Heart right ventricle (tissue), 16 donors: ENCODE measurements at regions of chr15 and their contacts with region 1.

Region 1: GRCh38 chr15:100111103-100112060 is 230.4 kb downstream of the ADAMTS17 start:
- DNase-seq: peak; percentile 69 to 74
- ATAC-seq: peak; percentile 20 to 81 (median 62)
- H3K4me3 ChIP-seq: no peak overlapping the region
- H3K27ac ChIP-seq: peak overlapping the region; percentile 58 to 99 (median 96)
- H3K4me1 ChIP-seq: peaks cover 36 to 64% (median 59%) of the 10 kb centered on the region in 9 donors
- H3K27me3 ChIP-seq: no peaks in the 10 kb centered on the region
- CTCF ChIP-seq: peak in 2 of 9 donors; percentile 15 to 17

Region 2: GRCh38 chr15:99961011-99961441 is 150.4 kb before region 1 on chr15:
- intact Hi-C with region 1: loop called in 1 of 10 experiments (anchors 10 kb)
- DNase-seq: peak in 1 of 2 donors; percentile 22
- ATAC-seq: peak; percentile 40 to 81 (median 66)
- H3K4me3 ChIP-seq: no peak overlapping the region
- H3K27ac ChIP-seq: no peak overlapping the region
- H3K4me1 ChIP-seq: no peaks in the 10 kb centered on the region
- H3K27me3 ChIP-seq: peaks cover 0 to 20% (median 4%) of the 10 kb centered on the region in 7 donors
- CTCF ChIP-seq: peak in 7 of 9 donors; percentile 40 to 64 (median 56)

Region 3: DNA sequence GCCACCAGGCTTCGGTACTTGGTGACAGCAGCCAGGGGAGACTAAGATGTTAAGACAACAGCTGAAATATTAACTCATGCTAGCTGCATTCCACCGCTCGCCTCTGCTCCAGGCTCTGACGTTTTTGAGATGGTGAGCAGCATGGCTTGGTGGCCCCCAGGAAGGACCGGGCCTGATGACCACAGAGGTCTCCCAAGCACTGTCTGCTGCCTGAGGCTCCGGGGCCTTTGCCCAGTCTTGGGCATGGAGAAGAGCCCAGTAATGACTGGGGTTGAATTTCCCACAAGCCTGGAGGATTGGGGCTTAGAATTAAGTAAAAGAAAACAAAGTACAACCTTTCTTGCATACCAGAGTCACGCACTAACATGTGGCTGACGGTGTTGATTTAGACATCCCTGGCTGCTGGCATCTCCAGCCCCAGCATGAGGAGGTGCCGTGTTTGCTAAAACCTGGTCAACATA is 134.5 kb before region 1 on chr15:
- intact Hi-C with region 1: loop called in 1 of 10 experiments (anchors 10 kb)
- DNase-seq: no peak
- ATAC-seq: no peak
- H3K4me3 ChIP-seq: no peak overlapping the region
- H3K27ac ChIP-seq: no peak overlapping the region
- H3K4me1 ChIP-seq: peaks cover 0 to 11% (median 0%) of the 10 kb centered on the region in 9 donors
- H3K27me3 ChIP-seq: no peaks in the 10 kb centered on the region
- CTCF ChIP-seq: no peak

Region 4: GRCh38 chr15:100020189-100020588 is 91.2 kb before region 1 on chr15:
- intact Hi-C with region 1: loop called in 1 of 10 experiments (anchors 10 kb)
- DNase-seq: no peak
- ATAC-seq: peak in 6 of 8 donors; percentile 13 to 44 (median 21)
- H3K4me3 ChIP-seq: no peak overlapping the region
- H3K27ac ChIP-seq: peak overlapping the region in 2 of 10 donors; percentile 20 to 25
- H3K4me1 ChIP-seq: peaks cover 0 to 20% (median 0%) of the 10 kb centered on the region in 9 donors
- H3K27me3 ChIP-seq: no peaks in the 10 kb centered on the region
- CTCF ChIP-seq: no peak

Region 5: GRCh38 chr15:100175393-100176114 is 64.2 kb after region 1 on chr15:
- intact Hi-C with region 1: no loop called
- DNase-seq: no peak
- ATAC-seq: no peak
- H3K4me3 ChIP-seq: no peak overlapping the region
- H3K27ac ChIP-seq: no peak overlapping the region
- H3K4me1 ChIP-seq: no peaks in the 10 kb centered on the region
- H3K27me3 ChIP-seq: no peaks in the 10 kb centered on the region
- CTCF ChIP-seq: no peak

Region 6: GRCh38 chr15:100207070-100207469 is 95.7 kb after region 1 on chr15:
- intact Hi-C with region 1: loop called in 1 of 10 experiments (anchors 5 kb)
- DNase-seq: no peak
- ATAC-seq: peak in 6 of 8 donors; percentile 50 to 86 (median 65)
- H3K4me3 ChIP-seq: no peak overlapping the region
- H3K27ac ChIP-seq: no peak overlapping the region
- H3K4me1 ChIP-seq: peaks cover 0 to 12% (median 7%) of the 10 kb centered on the region in 9 donors
- H3K27me3 ChIP-seq: no peaks in the 10 kb centered on the region
- CTCF ChIP-seq: no peak

Region 7: DNA sequence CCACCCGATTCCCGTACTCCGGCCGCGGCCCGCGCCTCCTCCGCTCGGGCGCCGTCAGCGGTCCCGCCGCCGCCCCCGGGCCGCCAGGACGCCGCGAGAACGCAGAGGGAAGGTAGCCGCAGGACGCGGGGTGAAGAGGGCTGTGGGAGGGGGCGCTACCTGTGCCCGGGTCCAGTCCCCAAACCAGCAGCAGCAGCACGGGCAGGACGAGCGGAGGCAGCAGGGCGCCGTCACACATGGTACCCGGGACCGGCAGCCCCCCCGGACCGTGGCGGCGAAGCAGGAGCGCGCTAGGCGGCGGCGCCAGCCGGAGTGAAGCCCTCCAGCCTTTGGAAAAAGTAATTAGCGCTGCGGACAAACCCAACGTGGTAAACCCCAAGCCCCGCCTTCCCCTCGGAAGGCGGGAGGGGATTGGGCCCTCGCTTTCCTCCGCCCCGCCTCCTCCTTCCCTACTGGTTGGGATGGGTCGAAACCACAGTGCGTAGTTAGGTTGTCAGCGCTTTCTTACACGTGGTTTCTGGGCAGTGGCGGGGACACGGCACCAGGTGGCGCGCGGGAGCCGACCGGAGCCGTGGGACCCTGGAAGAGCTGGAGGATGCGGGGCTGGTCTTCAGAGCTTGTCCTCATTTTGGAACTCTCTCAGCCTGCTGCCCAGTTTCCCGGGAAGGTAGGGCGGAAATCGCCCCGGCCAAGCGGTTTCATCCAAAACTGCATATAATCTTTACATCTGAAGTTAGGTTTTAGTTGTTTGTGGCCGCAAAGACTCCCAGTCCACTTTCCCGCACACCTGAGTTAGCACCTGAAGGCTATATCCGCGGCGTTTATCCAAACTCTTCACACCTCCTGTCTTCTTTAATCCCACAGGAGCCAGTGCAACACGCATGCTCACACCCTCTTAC is 230.5 kb after region 1 on chr15 and contains the start of gene ADAMTS17:
- intact Hi-C with region 1: loop called in 4 of 10 experiments (anchors 5 to 10 kb)
- DNase-seq: peak; percentile 94 to 96
- ATAC-seq: peak; percentile 98 to 100 (median 99)
- H3K4me3 ChIP-seq: peak within 1 kb of the TSS; percentile 55 to 86 (median 72)
- H3K27ac ChIP-seq: peak within 1 kb of the TSS in 7 of 10 donors; percentile 39 to 78 (median 45)
- H3K4me1 ChIP-seq: peaks cover 0 to 14% (median 7%) of the 10 kb centered on the region in 9 donors
- H3K27me3 ChIP-seq: peaks cover 0 to 45% (median 13%) of the 10 kb centered on the region in 7 donors
- CTCF ChIP-seq: peak; percentile 83 to 98 (median 95)
- total RNA-seq, gene ADAMTS17: 0.47 to 5.0 (median 1.3) TPM

Region 8: DNA sequence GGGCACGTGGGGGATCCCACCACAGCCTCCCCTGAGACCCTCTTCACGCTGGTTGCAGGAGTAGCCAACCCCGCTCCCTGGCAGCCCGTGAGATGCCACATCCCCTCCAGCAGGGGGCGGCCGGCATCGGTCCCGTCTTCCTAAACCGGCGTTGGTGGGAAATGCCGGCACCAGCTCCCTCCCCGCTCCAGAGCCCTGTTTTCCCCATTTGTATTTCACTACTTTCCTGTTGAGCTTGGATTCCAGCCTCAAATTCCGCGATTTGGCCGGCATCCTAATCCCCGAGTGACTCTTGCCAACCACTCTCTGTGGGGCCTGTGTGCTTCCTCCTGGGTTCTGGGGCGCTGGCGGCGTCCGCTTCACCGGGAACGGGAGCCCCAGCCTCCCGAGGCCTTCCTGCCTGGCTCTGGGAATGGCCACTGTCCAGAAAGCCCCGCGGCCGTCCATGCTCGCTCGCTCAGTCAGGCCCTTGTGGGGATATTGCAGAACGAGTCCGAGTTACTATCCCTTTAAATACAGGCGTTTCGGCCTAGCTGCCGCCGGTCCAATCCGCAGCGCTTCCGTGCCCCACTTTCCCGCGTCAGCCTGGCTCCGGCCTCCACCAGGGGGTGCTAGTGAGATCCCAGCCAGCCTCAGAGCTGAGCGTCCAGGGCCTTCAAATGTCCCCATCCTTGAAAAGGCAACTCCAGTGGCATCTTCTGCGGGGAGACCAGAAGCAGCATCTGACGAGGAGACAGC is 238.5 kb after region 1 on chr15:
- intact Hi-C with region 1: loop called in 2 of 10 experiments (anchors 10 kb)
- DNase-seq: peak; percentile 93
- ATAC-seq: peak; percentile 95 to 98 (median 98)
- H3K4me3 ChIP-seq: peak overlapping the region; percentile 38 to 90 (median 77)
- H3K27ac ChIP-seq: peak overlapping the region; percentile 64 to 99 (median 94)
- H3K4me1 ChIP-seq: peaks cover 0 to 15% (median 5%) of the 10 kb centered on the region in 9 donors
- H3K27me3 ChIP-seq: peaks cover 0 to 15% (median 11%) of the 10 kb centered on the region in 7 donors
- CTCF ChIP-seq: peak; percentile 78 to 93 (median 81)